T-cell (primary cell): ENCODE measurements at regions of chr22 and their contacts with region 1.

Region 1: DNA sequence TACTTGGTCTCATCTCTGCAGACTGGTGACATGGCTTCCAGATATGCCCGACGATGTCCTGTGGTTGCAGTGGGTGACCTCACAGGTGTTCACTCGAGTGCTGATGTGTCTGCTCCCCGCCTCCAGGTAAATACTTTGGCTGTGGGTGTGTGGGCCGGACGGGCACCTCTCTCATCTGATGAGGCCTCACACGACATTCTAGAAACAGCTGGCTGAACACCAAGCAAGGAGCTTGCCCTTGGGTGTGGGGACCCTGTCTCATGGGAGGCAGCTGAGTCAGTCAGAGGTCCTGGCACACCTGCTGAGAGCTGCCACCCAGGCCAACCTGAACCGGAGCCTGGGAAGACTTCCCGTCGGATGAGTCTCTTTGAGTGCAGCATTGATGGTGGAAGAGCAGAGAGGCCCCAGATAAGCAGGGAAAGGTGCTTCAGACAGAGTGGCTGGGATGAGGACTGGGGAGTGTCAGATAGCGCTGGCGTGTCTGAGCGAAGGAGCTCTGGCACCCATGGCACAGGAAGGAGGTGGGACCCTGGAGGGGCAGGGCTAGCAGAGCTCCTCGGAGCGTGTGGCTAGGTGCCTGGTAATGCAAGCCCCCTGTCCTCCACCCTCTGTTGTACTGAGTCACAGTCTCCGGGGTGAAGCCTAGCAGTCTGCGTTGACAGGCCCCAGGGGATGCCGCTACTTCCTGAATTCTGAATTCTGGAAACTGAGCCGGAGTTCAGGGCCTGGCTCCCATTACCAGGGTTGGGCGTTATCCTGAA is 10.4 kb upstream of the SAMM50 start:
- DNase-seq: no peak
- ATAC-seq: no peak
- H3K4me3 ChIP-seq: no peak overlapping the region
- H3K4me3 Mint-ChIP-seq: no peak overlapping the region
- H3K27ac ChIP-seq: no peak overlapping the region
- H3K27ac Mint-ChIP-seq: no peak overlapping the region
- H3K4me1 ChIP-seq: peaks cover 0 to 3% of the 10 kb centered on the region in 2 experiments
- H3K4me1 Mint-ChIP-seq: peaks cover 0 to 7% (median 0%) of the 10 kb centered on the region in 3 donors
- H3K27me3 ChIP-seq: peaks cover 0 to 27% of the 10 kb centered on the region in 2 experiments
- H3K27me3 Mint-ChIP-seq: peaks cover 21 to 27% of the 10 kb centered on the region in 2 donors

Region 2: DNA sequence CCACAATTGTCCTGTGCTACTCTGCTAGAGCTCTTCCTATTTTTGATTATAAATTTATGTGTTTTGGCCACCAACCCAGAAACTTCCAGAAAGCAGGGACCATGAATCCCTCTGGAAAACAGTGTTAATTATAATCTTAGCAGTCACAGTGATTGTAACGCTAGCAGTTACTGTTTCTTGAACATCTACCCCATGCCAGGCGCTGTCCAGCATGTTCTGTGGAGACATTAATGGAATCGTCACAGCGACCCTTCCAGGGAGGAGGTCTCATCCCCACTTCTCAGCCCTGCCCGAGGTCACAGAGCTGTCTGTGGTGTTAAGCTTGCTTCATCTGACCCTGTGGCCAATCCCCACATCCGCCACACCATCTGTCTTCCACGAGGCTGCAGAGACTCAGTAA is 39.2 kb before region 1 on chr22:
- CTCF ChIA-PET with region 1: interaction called in 1 of 2 experiments, 3 read pairs
- POLR2A ChIA-PET with region 1: interaction called in 1 of 2 experiments, 11 read pairs
- DNase-seq: no peak
- ATAC-seq: no peak
- H3K4me3 ChIP-seq: no peak overlapping the region
- H3K4me3 Mint-ChIP-seq: no peak overlapping the region
- H3K27ac ChIP-seq: no peak overlapping the region
- H3K27ac Mint-ChIP-seq: no peak overlapping the region
- H3K4me1 ChIP-seq: no peaks in the 10 kb centered on the region
- H3K4me1 Mint-ChIP-seq: no peaks in the 10 kb centered on the region
- H3K27me3 ChIP-seq: peaks cover 0 to 54% of the 10 kb centered on the region in 2 experiments
- H3K27me3 Mint-ChIP-seq: peaks cover 15 to 35% of the 10 kb centered on the region in 2 donors